Activated T-helper 1 cell treated with anti-CD3 and anti-CD28 coated beads, Interleukin-12 subunit alpha, Interleukin-12 subunit beta, Interleukin-2, Interleukin-4 antibody, amounts not matched to agents 30 ng/mL and 10 ng/mL and 1 ng/mL, durations not matched to agents 14 hours and 24 hours and 36 hours (primary cell): ENCODE measurements at regions of chr3 and their contacts with region 1.

Region 1: GRCh38 chr3:197906023-197906849 is 43.8 kb upstream of the RPL35A start:
- DNase-seq: peak; percentile 65
- H3K4me3 Mint-ChIP-seq: peak overlapping the region; percentile 25
- H3K27ac Mint-ChIP-seq: peak overlapping the region; percentile 85
- H3K4me1 Mint-ChIP-seq: peaks cover 24% of the 10 kb centered on the region
- H3K27me3 Mint-ChIP-seq: peaks cover 4% of the 10 kb centered on the region

Region 2: DNA sequence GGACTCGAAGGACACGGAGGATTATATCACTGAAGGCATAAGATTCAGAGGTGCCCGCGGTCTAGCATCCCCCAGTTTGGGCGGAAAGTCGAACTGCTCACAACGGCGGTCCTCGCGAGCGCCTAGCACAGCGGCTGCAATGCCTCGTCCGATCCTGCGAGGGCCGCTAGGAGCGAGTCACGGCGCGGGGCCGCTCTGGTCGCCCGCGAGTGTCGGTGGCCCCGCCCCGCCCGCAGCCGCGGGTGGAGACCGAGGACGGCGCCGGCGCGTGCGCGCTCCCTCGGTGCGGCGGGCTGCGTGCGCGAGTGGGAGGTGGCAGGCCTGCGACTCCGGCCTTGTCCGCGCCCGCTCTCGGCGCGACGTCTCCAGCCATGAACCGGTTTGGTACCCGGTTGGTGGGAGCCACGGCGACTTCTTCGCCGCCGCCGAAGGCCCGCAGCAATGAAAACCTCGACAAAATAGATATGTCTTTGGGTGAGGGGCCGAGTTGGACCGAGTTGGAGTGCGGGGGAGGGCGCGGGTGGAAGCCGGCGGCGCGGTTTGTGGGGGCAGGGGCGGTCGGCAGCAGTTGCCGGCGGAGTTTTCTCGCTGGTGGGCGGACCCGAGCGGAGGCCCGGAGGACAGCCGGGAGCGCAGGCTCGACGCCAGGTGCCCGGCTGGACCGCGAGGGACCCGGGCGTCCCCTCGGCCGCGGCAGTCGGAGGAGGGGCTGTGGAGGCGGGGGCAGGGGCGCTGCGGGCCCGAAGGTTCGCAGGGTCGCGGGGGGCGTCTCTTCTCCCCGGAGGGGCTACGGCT is 156.4 kb before region 1 on chr3 and contains the start of gene FYTTD1:
- intact Hi-C with region 1: loop called (anchors 1 kb)
- DNase-seq: peak; percentile 85
- H3K4me3 Mint-ChIP-seq: peak within 1 kb of the TSS; percentile 97
- H3K27ac Mint-ChIP-seq: peak within 1 kb of the TSS; percentile 95
- H3K4me1 Mint-ChIP-seq: peaks cover 44% of the 10 kb centered on the region
- H3K27me3 Mint-ChIP-seq: peaks cover 13% of the 10 kb centered on the region
- total RNA-seq, gene FYTTD1: 59.0 and 77.2 TPM in 2 replicates

Region 3: GRCh38 chr3:197878427-197878826 is 27.8 kb before region 1 on chr3:
- intact Hi-C with region 1: loop called (anchors 1 kb)
- DNase-seq: peak; percentile 46
- H3K4me3 Mint-ChIP-seq: peak overlapping the region; percentile 65
- H3K27ac Mint-ChIP-seq: peak overlapping the region; percentile 90
- H3K4me1 Mint-ChIP-seq: peaks cover 25% of the 10 kb centered on the region
- H3K27me3 Mint-ChIP-seq: no peaks in the 10 kb centered on the region

Region 4: DNA sequence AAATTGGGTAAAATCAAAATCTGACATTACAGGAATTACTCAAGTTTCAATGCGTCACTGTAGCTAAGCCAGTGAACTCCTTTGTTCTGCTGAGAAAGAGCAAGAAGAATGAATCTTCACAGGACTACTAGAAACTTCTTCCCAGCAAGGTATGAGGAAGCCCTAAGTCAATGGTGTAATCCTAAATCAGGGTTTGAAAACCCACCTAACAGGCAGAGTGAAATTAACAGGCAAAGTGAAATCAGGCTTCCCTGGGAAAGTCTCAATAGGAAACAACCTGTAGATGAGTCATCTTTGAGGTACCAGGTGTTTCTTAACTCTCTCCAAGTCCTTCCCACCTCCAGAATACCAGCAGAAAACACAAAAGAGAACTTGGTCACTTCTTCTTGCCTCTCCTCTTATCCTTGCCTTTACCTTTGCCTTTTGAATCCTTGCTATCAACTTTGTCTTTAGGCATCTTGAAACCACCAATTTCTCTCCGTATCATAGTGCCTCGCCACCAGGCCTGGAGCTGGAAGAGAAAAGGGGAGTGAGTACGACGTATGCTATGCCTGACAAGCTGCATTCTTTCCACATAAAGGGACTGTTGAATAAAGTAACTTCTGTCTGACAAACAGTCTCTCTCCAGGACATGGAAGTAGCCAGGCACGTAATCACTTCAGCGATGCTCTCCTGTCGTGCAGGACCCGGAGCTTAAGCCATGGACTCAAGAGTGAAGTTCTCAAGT is 16.9 kb before region 1 on chr3:
- intact Hi-C with region 1: no loop called
- DNase-seq: no peak
- H3K4me3 Mint-ChIP-seq: no peak overlapping the region
- H3K27ac Mint-ChIP-seq: no peak overlapping the region
- H3K4me1 Mint-ChIP-seq: peaks cover 10% of the 10 kb centered on the region
- H3K27me3 Mint-ChIP-seq: no peaks in the 10 kb centered on the region

Region 5: DNA sequence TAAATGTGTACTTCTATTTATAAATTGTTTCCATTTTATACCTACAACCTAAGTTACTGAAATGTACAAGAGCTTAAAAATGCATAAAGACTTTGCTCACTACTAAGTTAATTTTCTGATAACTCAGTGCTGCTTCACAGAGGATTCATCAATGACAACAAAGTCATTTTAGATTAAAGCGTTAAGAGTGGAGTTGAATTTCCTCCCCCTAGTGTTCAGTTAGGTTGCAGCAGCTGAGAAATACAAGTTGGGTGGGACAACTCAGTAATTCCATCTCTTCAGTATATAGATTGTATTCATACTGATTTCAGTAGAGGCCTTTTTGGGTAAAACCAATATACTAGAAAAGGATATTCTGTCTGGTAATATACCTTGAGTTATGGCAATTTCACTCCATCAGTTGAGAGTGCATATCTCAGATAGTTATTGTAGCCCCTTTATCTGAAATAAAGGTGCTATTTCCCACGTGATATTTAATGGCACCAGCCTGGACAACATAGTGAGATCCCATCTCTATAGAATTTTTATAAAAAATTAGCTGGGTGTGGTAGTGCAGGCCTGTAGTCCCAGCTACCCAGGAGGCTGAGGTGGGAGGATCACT is 36.8 kb after region 1 on chr3:
- intact Hi-C with region 1: loop called (anchors 1 kb)
- DNase-seq: peak; percentile 20
- H3K4me3 Mint-ChIP-seq: no peak overlapping the region
- H3K27ac Mint-ChIP-seq: no peak overlapping the region
- H3K4me1 Mint-ChIP-seq: peaks cover 8% of the 10 kb centered on the region
- H3K27me3 Mint-ChIP-seq: no peaks in the 10 kb centered on the region

Region 6: GRCh38 chr3:197959898-197960693 is 53.9 kb after region 1 on chr3 and contains the start of gene LMLN:
- intact Hi-C with region 1: loop called (anchors 1 kb)
- DNase-seq: peak; percentile 94
- H3K4me3 Mint-ChIP-seq: peak within 1 kb of the TSS; percentile 86
- H3K27ac Mint-ChIP-seq: peak within 1 kb of the TSS; percentile 93
- H3K4me1 Mint-ChIP-seq: peaks cover 51% of the 10 kb centered on the region
- H3K27me3 Mint-ChIP-seq: no peaks in the 10 kb centered on the region
- total RNA-seq, gene LMLN: 2.8 and 3.7 TPM in 2 replicates

Region 7: GRCh38 chr3:198080521-198081280 is 174.5 kb after region 1 on chr3:
- intact Hi-C with region 1: loop called (anchors 1 kb)
- DNase-seq: peak; percentile 77
- H3K4me3 Mint-ChIP-seq: peak overlapping the region; percentile 81
- H3K27ac Mint-ChIP-seq: peak overlapping the region; percentile 67
- H3K4me1 Mint-ChIP-seq: peaks cover 17% of the 10 kb centered on the region
- H3K27me3 Mint-ChIP-seq: peaks cover 63% of the 10 kb centered on the region